GM12878 (cell line): ENCODE measurements at regions of chrX and their contacts with region 1.

Region 1: GRCh38 chrX:74614093-74614909 is at the start of gene RLIM:
- DNase-seq: peak; percentile 85
- ATAC-seq: peak; percentile 94
- H3K4me3 ChIP-seq: peak within 1 kb of the TSS; percentile 72
- H3K27ac ChIP-seq: peak within 1 kb of the TSS; percentile 95
- H3K4me1 ChIP-seq: no peaks in the 10 kb centered on the region
- H3K27me3 ChIP-seq: no peaks in the 10 kb centered on the region
- CTCF ChIP-seq: no peak
- EP300 ChIP-seq: 0 out of 4 replicates have a peak, but pooled peaks of 1 of the 2 experiments have one; percentile 23
- POLR2A ChIP-seq: peak; percentile 91
- RAD21 ChIP-seq: no peak
- polyA plus RNA-seq, gene RLIM: 4.0 to 5.2 TPM

Region 2: DNA sequence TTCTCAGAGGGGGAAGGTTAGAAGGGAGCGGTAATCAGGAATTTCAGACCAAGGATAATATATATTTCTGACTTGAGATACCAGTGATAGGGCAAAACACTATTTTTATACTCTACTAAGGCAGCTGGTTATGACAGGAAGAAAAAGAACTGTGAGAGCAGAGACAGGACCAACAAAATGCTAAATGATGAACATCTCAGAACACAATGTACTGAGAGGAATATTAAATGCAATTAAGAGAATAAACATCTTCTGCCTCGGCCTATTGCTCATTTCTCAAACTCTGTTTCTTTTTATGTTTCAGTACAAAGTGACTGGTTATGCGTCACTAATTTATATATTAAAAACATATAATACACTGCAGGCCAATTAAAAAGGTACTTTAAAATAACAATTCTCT is 122.1 kb after region 1 on chrX:
- CTCF ChIA-PET with region 1: no interaction called
- POLR2A ChIA-PET with region 1: no interaction called
- RAD21 ChIA-PET with region 1: no interaction called
- SMC1A ChIA-PET with region 1: no interaction called
- in situ Hi-C with region 1: no loop called
- intact Hi-C with region 1: loop called (anchors 10 kb)
- DNase-seq: no peak
- ATAC-seq: no peak
- H3K4me3 ChIP-seq: no peak overlapping the region
- H3K27ac ChIP-seq: no peak overlapping the region
- H3K4me1 ChIP-seq: no peaks in the 10 kb centered on the region
- H3K27me3 ChIP-seq: no peaks in the 10 kb centered on the region
- CTCF ChIP-seq: no peak
- EP300 ChIP-seq: no peak
- POLR2A ChIP-seq: no peak
- RAD21 ChIP-seq: no peak

Region 3: DNA sequence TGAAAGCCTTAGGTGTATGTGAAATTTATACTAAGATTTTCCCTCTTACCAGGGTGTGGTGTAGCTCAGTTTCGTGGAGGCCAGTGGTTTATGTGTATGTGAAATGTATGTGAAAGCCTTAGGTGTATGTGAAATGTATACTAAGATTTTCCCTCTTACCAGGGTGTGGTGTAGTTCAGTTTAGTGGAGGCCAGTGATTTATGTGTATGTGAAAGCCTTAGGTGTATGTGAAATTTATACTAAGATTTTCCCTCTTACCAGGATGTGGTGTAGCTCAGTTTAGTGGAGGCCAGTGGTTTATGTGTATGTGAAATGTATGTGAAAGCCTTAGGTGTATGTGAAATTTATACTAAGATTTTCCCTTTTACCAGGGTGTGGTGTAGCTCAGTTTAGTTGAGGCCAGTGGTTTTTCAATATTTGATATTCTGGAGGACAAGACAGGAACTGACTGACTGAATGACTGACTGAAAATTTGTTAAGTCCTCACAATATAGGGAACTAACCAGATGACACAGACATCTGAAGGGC is 167.3 kb after region 1 on chrX:
- CTCF ChIA-PET with region 1: no interaction called
- POLR2A ChIA-PET with region 1: no interaction called
- RAD21 ChIA-PET with region 1: interaction called, 3 read pairs
- SMC1A ChIA-PET with region 1: interaction called, 3 read pairs
- in situ Hi-C with region 1: no loop called
- intact Hi-C with region 1: loop called (anchors 2 kb)
- DNase-seq: peak; percentile 76
- ATAC-seq: peak; percentile 73
- H3K4me3 ChIP-seq: no peak overlapping the region
- H3K27ac ChIP-seq: peak overlapping the region; percentile 85
- H3K4me1 ChIP-seq: peaks cover 10% of the 10 kb centered on the region
- H3K27me3 ChIP-seq: no peaks in the 10 kb centered on the region
- CTCF ChIP-seq: no peak
- EP300 ChIP-seq: no peak
- POLR2A ChIP-seq: no peak
- RAD21 ChIP-seq: peak; percentile 16; the same call in 1 of the 2 replicates

Region 4: DNA sequence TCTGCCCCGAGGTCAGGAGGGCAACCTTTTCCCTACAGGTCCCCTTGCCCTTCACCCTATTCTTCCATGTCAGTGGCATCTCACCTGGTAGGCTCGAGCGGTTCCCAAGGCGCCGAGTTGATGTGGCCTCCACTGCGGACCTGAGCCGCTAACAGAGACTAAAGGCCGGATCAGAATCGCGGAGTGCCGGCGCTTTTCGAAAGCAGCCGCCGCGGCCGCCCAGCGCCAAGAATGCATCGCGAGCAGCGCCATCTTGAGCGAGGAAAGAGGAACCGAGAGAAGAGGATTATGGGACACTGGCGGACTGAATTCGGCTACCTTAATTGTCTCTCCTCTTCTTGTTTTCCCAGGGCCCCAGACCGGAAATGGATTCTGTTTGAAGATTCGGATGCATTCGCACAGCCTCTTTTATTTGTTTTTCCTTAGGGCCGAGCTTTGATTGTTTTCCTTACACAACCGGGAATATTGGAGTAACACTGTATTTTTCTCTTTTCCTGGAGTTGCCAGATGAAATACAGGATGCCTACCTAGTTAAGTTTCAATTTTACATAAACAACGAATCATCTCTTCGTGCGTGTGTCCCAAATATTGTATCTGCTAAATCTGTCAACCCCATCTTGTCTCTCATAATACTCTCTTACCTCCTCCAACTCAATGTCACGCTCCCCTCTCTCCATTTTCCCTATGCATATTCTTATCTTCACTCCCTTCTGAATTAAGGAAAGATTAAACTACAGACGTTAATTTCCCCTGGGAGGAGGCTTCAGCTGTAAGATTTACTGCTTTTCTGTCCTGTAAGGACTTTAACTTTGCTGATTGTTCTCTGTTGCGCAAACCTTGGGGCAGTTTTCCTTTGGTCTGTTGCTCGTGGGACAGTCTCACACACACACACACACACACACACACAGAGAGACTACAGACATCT is 542.0 kb after region 1 on chrX and contains the start of gene ABCB7:
- CTCF ChIA-PET with region 1: no interaction called
- POLR2A ChIA-PET with region 1: no interaction called
- RAD21 ChIA-PET with region 1: no interaction called
- SMC1A ChIA-PET with region 1: no interaction called
- in situ Hi-C with region 1: no loop called
- intact Hi-C with region 1: loop called (anchors 5 kb)
- DNase-seq: peak; percentile 34
- ATAC-seq: peak; percentile 89
- H3K4me3 ChIP-seq: peak within 1 kb of the TSS; percentile 74
- H3K27ac ChIP-seq: peak within 1 kb of the TSS; percentile 74
- H3K4me1 ChIP-seq: no peaks in the 10 kb centered on the region; the same call in 1 of the 2 replicates
- H3K27me3 ChIP-seq: no peaks in the 10 kb centered on the region
- CTCF ChIP-seq: 0 out of 6 replicates have a peak, but pooled peaks of 1 of the 3 experiments have one; percentile 4
- EP300 ChIP-seq: no peak
- POLR2A ChIP-seq: peak; percentile 84
- RAD21 ChIP-seq: no peak
- polyA plus RNA-seq, gene ABCB7: 31.1 to 34.6 TPM

Region 5: DNA sequence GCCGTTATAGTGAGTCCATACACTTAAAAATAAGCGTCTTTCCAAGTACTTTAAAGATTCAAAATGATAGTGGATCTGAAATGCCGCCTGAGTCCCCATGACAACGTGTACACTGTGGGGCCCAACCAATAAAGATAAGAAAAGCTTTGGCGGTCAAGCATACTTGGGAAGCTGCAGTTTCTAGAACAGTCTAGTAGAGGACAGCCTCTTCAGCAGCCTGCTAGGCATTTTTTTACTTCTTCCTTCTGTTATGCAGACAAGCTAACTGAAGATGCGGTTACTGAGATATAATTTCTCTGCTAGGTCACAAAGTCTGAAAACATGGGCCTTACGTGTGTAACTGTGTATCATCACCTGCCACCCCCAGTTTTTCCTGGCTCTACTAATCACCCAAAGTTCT is 659.2 kb after region 1 on chrX:
- CTCF ChIA-PET with region 1: no interaction called
- POLR2A ChIA-PET with region 1: no interaction called
- RAD21 ChIA-PET with region 1: no interaction called
- SMC1A ChIA-PET with region 1: no interaction called
- in situ Hi-C with region 1: loop called (anchors 10 kb)
- intact Hi-C with region 1: no loop called
- DNase-seq: no peak
- ATAC-seq: peak; percentile 7; the same call in 2 of the 3 replicates
- H3K4me3 ChIP-seq: peak overlapping the region; percentile 70
- H3K27ac ChIP-seq: peak overlapping the region; percentile 81
- H3K4me1 ChIP-seq: no peaks in the 10 kb centered on the region
- H3K27me3 ChIP-seq: no peaks in the 10 kb centered on the region
- CTCF ChIP-seq: no peak
- EP300 ChIP-seq: no peak
- POLR2A ChIP-seq: no peak
- RAD21 ChIP-seq: no peak